Endothelial cell of umbilical vein (primary cell): ENCODE measurements at regions of chr1 and their contacts with region 1.

Region 1: DNA sequence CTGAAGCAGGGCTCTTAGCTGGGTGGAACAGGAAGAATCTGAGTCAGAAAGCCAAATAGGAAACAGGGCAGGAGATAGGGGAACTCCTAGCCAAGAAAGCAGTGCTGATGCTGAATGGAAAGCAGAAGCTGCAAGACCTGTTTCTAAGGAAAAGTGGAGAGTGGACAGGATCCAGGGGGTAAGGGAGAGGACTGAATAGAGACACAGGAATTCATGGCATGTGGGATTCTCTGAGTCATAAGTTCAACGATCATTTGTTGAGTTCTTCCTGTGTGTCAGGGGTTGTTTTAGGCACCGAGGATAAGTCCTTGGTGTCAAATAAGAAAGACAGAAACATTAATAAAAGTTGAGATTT is 153.8 kb upstream of the FGGY start:
- DNase-seq: peak; percentile 91
- H3K4me3 ChIP-seq: no peak overlapping the region
- H3K27ac ChIP-seq: peak overlapping the region; percentile 82
- H3K4me1 ChIP-seq: peaks cover 43% of the 10 kb centered on the region
- H3K27me3 ChIP-seq: no peaks in the 10 kb centered on the region
- CTCF ChIP-seq: no peak
- POLR2A ChIP-seq: peak; percentile 45

Region 2: DNA sequence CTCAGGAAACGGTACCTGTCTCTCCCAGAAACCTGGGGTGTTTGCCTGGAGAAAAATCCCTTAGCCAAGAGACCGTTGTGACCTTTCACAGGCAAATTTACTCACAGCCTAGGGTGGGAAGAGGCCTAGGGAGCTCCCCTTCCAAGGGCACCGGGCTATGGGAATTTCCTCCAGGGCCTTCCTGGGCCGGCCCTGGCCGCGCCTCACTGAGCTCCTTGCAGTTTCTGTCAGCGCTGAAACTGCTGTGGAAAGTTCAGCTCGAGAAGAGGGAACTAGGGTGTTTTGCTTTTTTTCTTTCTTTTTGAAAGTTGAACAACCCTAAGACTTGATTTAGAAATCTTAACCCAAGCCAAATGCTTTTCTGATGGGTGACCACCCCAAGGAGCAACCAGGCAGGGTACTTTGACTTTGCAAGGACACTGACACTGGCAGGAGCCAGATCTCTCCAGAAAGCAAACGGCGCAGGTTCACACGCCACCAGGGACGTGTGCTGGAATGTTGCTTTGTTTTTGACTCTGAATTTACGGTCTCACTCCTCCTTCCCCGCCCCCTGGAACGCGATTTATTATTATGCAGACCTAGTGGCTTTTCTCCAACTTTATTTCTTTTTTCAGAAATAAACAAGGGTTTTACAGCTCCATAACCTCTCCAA is 129.7 kb before region 1 on chr1:
- CTCF ChIA-PET with region 1: no interaction called
- POLR2A ChIA-PET with region 1: no interaction called
- dilution Hi-C with region 1: no loop called
- intact Hi-C with region 1: loop called (anchors 5 kb)
- DNase-seq: peak; percentile 76
- H3K4me3 ChIP-seq: peak overlapping the region in 1 of 3 experiments; percentile 9
- H3K27ac ChIP-seq: peak overlapping the region; percentile 59
- H3K4me1 ChIP-seq: peaks cover 19% of the 10 kb centered on the region
- H3K27me3 ChIP-seq: no peaks in the 10 kb centered on the region
- CTCF ChIP-seq: no peak
- POLR2A ChIP-seq: no peak

Region 3: GRCh38 chr1:59083946-59084865 is 58.9 kb before region 1 on chr1:
- CTCF ChIA-PET with region 1: no interaction called
- POLR2A ChIA-PET with region 1: interaction called, 3 read pairs
- dilution Hi-C with region 1: no loop called
- intact Hi-C with region 1: loop called (anchors 1 kb)
- DNase-seq: peak; percentile 67
- H3K4me3 ChIP-seq: no peak overlapping the region
- H3K27ac ChIP-seq: peak overlapping the region; percentile 49
- H3K4me1 ChIP-seq: peaks cover 23% of the 10 kb centered on the region
- H3K27me3 ChIP-seq: no peaks in the 10 kb centered on the region
- CTCF ChIP-seq: no peak
- POLR2A ChIP-seq: peak; percentile 20

Region 4: GRCh38 chr1:59279648-59280047 is 136.5 kb after region 1 on chr1:
- CTCF ChIA-PET with region 1: no interaction called
- POLR2A ChIA-PET with region 1: no interaction called
- dilution Hi-C with region 1: no loop called
- intact Hi-C with region 1: loop called (anchors 5 kb)
- DNase-seq: no peak
- H3K4me3 ChIP-seq: no peak overlapping the region
- H3K27ac ChIP-seq: no peak overlapping the region
- H3K4me1 ChIP-seq: peaks cover 14% of the 10 kb centered on the region
- H3K27me3 ChIP-seq: no peaks in the 10 kb centered on the region
- CTCF ChIP-seq: no peak
- POLR2A ChIP-seq: no peak

Region 5: GRCh38 chr1:59332983-59333382 is 189.9 kb after region 1 on chr1:
- CTCF ChIA-PET with region 1: no interaction called
- POLR2A ChIA-PET with region 1: no interaction called
- dilution Hi-C with region 1: no loop called
- intact Hi-C with region 1: no loop called
- DNase-seq: peak; percentile 51
- H3K4me3 ChIP-seq: no peak overlapping the region
- H3K27ac ChIP-seq: peak overlapping the region; percentile 45
- H3K4me1 ChIP-seq: peaks cover 32% of the 10 kb centered on the region
- H3K27me3 ChIP-seq: no peaks in the 10 kb centered on the region
- CTCF ChIP-seq: no peak
- POLR2A ChIP-seq: no peak